ENCODE measurements at regions of chr14 and their contacts with region 1.

Region 1: GRCh38 chr14:53285805-53286204 is 132.7 kb upstream of the DDHD1 start:
- H3K4me3 ChIP-seq: no peak overlapping the region
- H3K27ac ChIP-seq: no peak overlapping the region
- H3K4me1 ChIP-seq: no peaks in the 10 kb centered on the region
- CTCF ChIP-seq: no peak

Region 2: DNA sequence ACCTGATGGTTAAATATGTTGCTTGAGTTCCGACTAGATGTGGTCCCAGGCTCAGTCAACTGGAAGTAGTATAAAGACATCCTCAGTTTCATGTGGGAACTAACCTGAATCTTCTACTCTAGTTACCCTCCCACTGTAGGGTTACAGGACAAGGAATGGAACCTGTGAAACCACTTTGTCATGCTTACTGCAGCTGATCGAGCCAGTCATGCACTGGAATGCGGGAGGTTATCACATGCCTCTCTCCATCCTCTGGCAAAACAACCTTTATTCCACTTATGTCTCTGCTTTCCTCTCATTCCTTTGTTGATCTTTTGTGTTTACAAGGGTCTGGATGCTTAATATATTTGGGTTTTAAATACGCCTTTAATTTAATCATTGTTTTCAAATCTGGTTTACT is 20.8 kb before region 1 on chr14:
- CTCF ChIA-PET with region 1: no interaction called
- POLR2A ChIA-PET with region 1: no interaction called
- H3K4me3 ChIP-seq: no peak overlapping the region
- H3K27ac ChIP-seq: no peak overlapping the region
- H3K4me1 ChIP-seq: no peaks in the 10 kb centered on the region
- CTCF ChIP-seq: no peak

Region 3: DNA sequence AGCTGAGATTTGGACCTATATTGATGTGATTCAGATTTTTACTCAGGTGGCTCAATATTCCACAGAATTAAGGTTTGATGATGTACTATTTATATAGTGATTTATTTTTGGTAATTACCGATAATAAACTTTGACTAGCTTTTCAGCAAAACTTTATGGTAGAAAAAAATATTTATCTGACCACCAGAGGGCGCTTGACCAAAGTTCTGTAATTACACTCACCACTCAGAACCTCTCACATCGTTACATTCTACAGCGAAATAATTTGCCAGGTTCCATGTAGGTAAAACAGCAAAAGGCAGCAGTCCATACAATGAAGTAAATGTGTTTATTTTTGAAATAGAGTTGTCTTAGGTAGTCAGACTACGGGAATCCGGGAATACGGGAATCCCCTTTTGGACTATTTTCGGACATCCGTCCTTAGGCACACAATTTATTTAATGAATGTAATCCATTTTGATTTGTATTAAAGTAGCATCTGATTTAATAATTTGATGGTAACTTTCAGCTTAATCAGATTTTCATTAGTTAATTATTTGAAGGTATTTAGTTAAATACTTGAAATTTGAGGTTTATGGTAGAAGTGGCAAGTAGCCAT is 10.3 kb after region 1 on chr14:
- CTCF ChIA-PET with region 1: interaction called, 22 read pairs
- POLR2A ChIA-PET with region 1: no interaction called
- H3K4me3 ChIP-seq: no peak overlapping the region
- H3K27ac ChIP-seq: no peak overlapping the region
- H3K4me1 ChIP-seq: no peaks in the 10 kb centered on the region
- CTCF ChIP-seq: no peak

Measured in HEK293 (cell line).